ENCODE measurements at regions of chr4 and their contacts with region 1.

Region 1: GRCh38 chr4:168183717-168184608 is 91.6 kb downstream of the ANXA10 start:
- DNase-seq: peak; percentile 61
- H3K4me3 ChIP-seq: no peak overlapping the region
- H3K27ac ChIP-seq: no peak overlapping the region
- H3K4me1 ChIP-seq: peaks cover 8% of the 10 kb centered on the region
- H3K27me3 ChIP-seq: no peaks in the 10 kb centered on the region

Region 2: DNA sequence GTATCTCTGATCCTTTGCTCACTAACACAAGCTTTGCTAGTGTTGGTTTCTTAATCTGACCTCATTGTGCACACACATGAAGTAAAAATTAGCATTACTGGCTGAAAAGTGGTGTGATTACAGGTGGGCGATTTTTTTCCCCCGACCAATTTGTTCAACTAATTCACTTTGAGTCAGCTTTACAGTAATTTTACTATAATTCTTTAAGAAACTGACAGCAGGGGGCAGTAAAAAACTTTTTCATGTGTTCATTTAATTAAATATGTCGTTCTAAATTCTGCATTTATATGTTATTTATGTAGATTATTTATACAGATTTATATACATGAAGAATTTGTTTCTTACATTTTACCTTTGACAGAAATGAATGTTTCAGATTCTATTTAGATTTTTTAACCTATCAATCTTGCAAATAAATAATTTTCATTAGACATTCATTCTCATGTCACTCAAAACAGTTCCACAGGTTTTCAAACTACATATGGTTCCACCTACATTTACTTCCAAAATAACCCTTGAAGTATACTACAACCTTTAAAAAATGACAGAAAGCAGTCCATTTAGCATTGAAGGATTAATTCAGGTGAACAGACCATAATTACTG is 330.4 kb after region 1 on chr4:
- in situ Hi-C with region 1: loop called (anchors 25 kb)
- DNase-seq: peak; percentile 64
- H3K4me3 ChIP-seq: no peak overlapping the region
- H3K27ac ChIP-seq: no peak overlapping the region
- H3K4me1 ChIP-seq: peaks cover 7% of the 10 kb centered on the region
- H3K27me3 ChIP-seq: no peaks in the 10 kb centered on the region

Region 3: GRCh38 chr4:168685136-168685809 is 501.3 kb after region 1 on chr4:
- in situ Hi-C with region 1: loop called (anchors 25 kb)
- DNase-seq: no peak
- H3K4me3 ChIP-seq: no peak overlapping the region
- H3K27ac ChIP-seq: no peak overlapping the region
- H3K4me1 ChIP-seq: no peaks in the 10 kb centered on the region; the same call in 1 of the 2 replicates
- H3K27me3 ChIP-seq: no peaks in the 10 kb centered on the region

Region 4: DNA sequence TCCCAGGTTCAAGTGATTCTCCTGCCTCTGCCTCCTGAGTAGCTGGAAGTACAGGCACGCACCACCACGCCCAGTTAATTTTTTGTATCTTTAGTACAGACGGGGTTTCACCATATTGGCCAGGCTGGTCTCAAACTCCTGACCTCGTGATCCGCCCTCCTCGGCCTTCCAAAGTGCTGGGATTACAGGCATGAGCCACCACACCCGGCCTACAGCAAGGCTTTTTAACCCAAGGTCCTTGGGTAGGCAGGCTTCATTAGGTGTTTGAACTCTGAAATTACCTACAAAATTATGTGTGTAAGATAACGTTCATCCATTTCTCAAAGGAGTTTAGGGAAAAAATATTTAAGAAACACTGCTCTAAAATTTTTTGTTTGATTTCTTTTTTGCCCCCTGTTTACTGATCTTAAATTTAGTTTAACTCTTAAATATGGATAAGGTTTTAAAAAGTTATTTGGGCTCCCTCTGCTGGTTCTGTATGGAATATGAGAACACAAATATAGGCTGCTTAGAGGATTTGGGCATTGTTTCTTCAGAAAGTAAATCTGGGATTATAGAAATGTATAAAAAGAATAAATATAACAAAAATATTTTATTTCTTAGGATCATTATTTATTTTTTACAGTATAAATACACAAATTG is 733.3 kb after region 1 on chr4:
- in situ Hi-C with region 1: loop called (anchors 10 kb)
- DNase-seq: peak; percentile 71
- H3K4me3 ChIP-seq: no peak overlapping the region
- H3K27ac ChIP-seq: no peak overlapping the region
- H3K4me1 ChIP-seq: 0 out of 2 replicates have a peak, but pooled peaks cover 3% of the 10 kb centered on the region
- H3K27me3 ChIP-seq: no peaks in the 10 kb centered on the region

Region 5: GRCh38 chr4:169485791-169486742 is 1302.1 kb after region 1 on chr4:
- in situ Hi-C with region 1: loop called (anchors 25 kb)
- DNase-seq: peak; percentile 77
- H3K4me3 ChIP-seq: peak overlapping the region; percentile 38; the same call in 1 of the 2 replicates
- H3K27ac ChIP-seq: no peak overlapping the region
- H3K4me1 ChIP-seq: peaks cover 17% of the 10 kb centered on the region
- H3K27me3 ChIP-seq: no peaks in the 10 kb centered on the region

Measured in GM23248 (cell line).